WTC11 (cell line): ENCODE measurements at regions of chr2 and their contacts with region 1.

Region 1: DNA sequence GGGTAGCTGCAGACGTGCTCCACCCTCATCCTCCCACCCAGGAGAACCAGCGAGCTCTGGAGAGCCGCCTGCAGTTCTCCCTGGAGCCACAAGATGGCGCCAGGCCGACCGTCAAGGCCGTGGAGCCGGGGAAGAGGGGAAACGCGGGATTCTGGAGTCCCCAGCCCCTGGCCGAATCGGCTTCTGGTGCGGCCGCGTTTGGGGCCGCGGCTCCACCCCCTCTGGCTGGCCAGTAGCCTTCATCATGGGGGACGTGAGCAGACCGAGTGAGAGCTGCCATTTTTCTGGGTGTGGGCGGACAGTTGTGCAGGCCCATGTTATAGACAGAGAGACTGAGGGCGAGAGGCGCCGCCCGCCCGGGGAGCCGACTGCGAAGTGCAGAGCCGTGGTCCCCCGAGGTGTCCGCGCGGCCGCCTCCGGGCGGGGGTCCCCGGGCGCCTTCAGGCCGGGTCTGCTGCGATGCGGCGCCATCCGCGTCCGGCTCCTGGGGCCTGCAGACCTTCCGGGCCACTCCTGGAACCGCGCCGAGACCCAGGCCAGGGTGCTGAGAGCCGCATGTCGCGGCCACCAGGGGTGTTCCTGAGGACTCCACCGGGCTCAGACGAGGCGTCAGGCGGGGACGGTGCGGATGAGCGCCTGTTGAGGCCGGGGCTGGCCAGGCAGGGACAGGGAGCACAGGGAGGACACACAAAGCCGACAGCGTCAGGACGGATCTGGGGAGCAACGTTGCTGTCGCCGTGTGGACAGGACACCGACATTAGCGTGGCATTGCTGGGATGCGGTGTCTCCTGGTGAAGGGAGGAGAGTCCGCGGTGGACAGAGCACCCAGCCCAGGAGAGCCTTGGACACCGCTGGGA is 418.2 kb upstream of the HS6ST1 start:
- DNase-seq: peak; percentile 92
- ATAC-seq: peak; percentile 90
- H3K4me3 Mint-ChIP-seq: peak overlapping the region; percentile 69
- H3K27ac Mint-ChIP-seq: no peak overlapping the region
- H3K4me1 Mint-ChIP-seq: peaks cover 3% of the 10 kb centered on the region; the same call in 1 of the 2 replicates
- H3K27me3 Mint-ChIP-seq: peaks cover 16% of the 10 kb centered on the region
- CTCF ChIP-seq: peak; percentile 99

Region 2: GRCh38 chr2:128750328-128751165 is 13.6 kb after region 1 on chr2:
- CTCF ChIA-PET with region 1: interaction called, 20 read pairs
- POLR2A ChIA-PET with region 1: no interaction called
- DNase-seq: no peak
- ATAC-seq: no peak
- H3K4me3 Mint-ChIP-seq: no peak overlapping the region
- H3K27ac Mint-ChIP-seq: no peak overlapping the region
- H3K4me1 Mint-ChIP-seq: peaks cover 26% of the 10 kb centered on the region
- H3K27me3 Mint-ChIP-seq: no peaks in the 10 kb centered on the region
- CTCF ChIP-seq: no peak

Region 3: GRCh38 chr2:128756365-128756717 is 19.4 kb after region 1 on chr2:
- CTCF ChIA-PET with region 1: interaction called, 10 read pairs
- POLR2A ChIA-PET with region 1: no interaction called
- DNase-seq: no peak
- ATAC-seq: no peak
- H3K4me3 Mint-ChIP-seq: no peak overlapping the region
- H3K27ac Mint-ChIP-seq: no peak overlapping the region
- H3K4me1 Mint-ChIP-seq: peaks cover 26% of the 10 kb centered on the region
- H3K27me3 Mint-ChIP-seq: no peaks in the 10 kb centered on the region
- CTCF ChIP-seq: no peak

Region 4: DNA sequence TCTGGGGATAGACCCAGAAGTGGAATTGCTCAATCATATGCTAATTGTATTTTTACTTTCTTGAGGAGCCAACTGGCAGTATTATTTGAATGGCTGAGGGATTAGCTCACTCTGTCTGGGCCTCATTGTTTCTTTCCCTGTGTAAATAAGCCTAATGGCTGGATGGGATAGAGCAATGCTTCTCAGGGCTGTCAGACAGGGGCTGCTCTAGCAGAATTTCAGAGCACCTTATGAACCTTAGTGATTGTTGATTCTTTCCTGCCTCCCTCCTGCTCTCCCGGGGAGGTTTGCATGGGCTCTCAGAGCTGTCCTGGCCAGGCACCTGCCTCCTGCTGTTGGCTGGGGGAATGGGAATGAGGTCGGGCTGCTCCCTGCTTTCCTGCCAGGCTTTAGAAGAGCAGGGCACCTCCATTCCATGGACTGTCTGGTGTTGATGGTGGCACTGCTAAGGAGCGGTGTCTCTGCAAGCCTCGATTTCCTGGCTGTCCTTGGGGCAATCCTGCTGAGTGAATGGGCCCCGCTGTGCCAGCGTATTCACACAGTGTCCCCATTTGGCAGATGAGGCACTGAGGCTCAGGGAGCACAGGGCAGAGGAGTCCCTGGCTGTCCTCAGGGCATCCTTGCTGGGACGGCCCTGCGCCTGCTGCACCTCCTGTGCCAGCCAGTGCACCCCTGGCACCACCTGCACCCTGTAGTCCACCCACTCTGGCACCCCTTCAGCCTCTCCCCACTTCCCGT is 50.0 kb after region 1 on chr2:
- CTCF ChIA-PET with region 1: interaction called, 13 read pairs
- POLR2A ChIA-PET with region 1: no interaction called
- DNase-seq: no peak
- ATAC-seq: peak; percentile 81
- H3K4me3 Mint-ChIP-seq: no peak overlapping the region
- H3K27ac Mint-ChIP-seq: no peak overlapping the region
- H3K4me1 Mint-ChIP-seq: peaks cover 18% of the 10 kb centered on the region
- H3K27me3 Mint-ChIP-seq: no peaks in the 10 kb centered on the region
- CTCF ChIP-seq: no peak